HEK293T (cell line): ENCODE measurements at regions of chr19 and their contacts with region 1.

Region 1: DNA sequence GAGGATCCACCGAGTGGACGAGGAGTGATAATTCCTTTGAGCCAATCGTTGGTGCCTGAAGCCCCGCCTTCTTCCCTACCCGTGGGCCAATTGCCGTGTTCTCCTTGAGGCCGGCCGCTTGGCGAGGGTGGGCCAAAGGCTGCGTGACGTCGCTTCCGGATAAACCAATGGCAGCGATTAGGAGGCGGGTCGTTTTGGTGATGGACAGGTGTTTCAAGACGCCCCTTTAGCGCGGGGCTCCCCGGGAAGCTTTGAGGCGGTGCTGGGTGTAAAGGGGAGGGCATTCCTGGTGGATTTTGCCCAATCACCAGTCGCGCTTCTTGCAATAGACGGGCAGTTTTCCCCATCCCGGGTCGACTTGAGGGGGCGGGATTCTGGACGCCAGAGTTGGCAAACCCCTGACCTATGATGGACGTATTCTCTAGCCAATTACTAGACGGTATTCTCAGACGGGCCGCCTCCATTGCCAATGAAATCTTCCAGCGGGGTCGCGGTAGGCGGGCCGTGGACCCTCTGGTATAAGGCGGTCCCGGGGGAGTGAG is 310 bp upstream of the PRMT1 start:
- DNase-seq: peak; percentile 91

Region 2: GRCh38 chr19:49497047-49497788 is 179.5 kb before region 1 on chr19:
- CTCF ChIA-PET with region 1: no interaction called
- POLR2A ChIA-PET with region 1: interaction called, 13 read pairs
- DNase-seq: no peak

Region 3: GRCh38 chr19:49580264-49581006 is 96.3 kb before region 1 on chr19 and contains the start of gene NOSIP:
- CTCF ChIA-PET with region 1: interaction called, 4 read pairs
- POLR2A ChIA-PET with region 1: interaction called, 16 read pairs
- DNase-seq: peak; percentile 93

Region 4: GRCh38 chr19:49590071-49590970 is 86.4 kb before region 1 on chr19:
- CTCF ChIA-PET with region 1: interaction called, 4 read pairs
- POLR2A ChIA-PET with region 1: interaction called, 11 read pairs
- DNase-seq: peak; percentile 95

Region 5: GRCh38 chr19:49640113-49640898 is 36.5 kb before region 1 on chr19 and contains the start of gene RRAS:
- CTCF ChIA-PET with region 1: interaction called, 8 read pairs
- POLR2A ChIA-PET with region 1: interaction called, 21 read pairs
- DNase-seq: peak; percentile 96

Region 6: DNA sequence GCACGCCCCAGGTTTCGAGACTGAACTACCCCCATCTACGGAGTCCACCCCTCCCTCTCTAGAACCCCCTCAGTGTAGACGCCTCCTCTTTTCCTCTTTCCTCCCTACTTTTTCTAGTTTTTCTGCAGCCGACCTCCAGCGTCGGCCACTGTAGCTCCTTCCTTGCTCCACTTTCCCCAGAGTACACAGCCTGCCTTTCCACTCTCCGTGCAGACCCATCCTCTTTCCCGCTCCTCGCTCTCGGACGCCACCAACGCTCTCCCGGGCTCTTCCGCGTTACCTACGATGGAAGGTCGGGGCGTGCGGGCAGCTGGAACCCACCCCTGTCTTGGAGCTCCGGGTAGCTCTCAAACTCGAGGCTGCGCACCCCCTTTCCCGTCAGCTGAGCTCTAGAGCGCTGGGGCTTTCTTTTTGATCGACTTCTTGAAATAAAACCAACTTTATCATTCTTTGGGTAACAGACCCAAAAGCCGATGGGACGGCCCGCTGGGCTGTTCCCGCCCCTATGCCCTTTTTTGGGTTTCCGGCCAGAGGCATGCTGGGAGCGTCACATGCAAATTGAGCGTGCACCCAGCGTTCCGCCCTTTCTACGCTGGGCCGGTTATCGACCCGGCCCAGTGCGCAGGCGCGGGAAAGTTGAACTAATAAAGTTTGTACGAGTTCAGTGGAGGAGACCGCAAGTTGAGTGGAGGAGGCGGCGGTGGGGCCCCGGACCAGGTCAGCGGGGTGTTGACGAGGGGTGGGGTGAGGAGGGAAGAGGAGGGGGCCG is 11.2 kb before region 1 on chr19 and contains the starts of genes BCL2L12 and IRF3:
- CTCF ChIA-PET with region 1: interaction called, 5 read pairs
- POLR2A ChIA-PET with region 1: interaction called, 44 read pairs
- DNase-seq: peak; percentile 92

Region 7: DNA sequence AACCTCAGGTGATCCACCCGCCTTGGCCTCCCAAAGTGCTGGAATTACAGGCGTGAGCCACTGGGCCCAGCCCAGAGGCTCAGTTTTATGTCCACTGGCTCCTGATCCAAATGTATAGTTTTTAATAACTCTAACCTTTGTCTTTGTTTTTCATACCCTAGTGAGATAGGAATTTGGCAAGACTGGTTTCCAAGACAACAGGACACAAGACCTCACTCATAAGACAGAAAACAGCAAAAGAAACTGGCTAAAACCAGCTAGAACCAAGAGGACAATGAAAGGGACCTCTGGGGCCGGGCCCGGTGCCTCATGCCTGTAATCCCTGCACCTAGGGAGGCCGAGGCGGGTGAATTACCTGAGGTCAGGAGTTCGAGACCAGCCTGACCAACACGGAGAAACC is 41.8 kb after region 1 on chr19:
- CTCF ChIA-PET with region 1: interaction called, 4 read pairs
- POLR2A ChIA-PET with region 1: interaction called, 20 read pairs
- DNase-seq: no peak